AG04450 (cell line): ENCODE measurements at regions of chr1 and their contacts with region 1.

Region 1: GRCh38 chr1:11289064-11289463 is 16.1 kb downstream of the UBIAD1 start:
- DNase-seq: no peak
- H3K4me3 ChIP-seq: no peak overlapping the region
- H3K27ac ChIP-seq: no peak overlapping the region
- H3K27me3 ChIP-seq: no peaks in the 10 kb centered on the region
- CTCF ChIP-seq: no peak

Region 2: DNA sequence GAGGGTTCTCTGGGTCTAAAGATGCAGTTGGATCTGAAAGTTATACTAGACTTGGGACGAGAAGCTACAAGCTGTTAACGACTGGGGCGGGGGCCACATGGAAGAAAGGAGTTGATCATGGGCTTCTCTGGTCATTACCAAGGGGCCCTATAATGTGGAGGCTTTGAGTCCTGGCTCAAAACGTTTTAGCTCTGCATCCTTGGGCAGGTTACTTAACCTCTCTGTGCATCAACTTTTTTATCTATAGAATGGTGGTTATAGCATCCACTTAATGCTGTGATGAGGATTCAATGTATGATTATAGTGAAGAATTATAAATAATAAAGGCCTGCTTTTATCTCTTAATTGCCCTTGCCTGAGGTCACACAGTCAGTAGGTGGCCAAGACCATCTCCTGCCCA is 37.0 kb after region 1 on chr1:
- CTCF ChIA-PET with region 1: interaction called, 10 read pairs
- POLR2A ChIA-PET with region 1: no interaction called
- DNase-seq: no peak
- H3K4me3 ChIP-seq: no peak overlapping the region
- H3K27ac ChIP-seq: no peak overlapping the region
- H3K27me3 ChIP-seq: peaks cover 18% of the 10 kb centered on the region
- CTCF ChIP-seq: no peak

Region 3: DNA sequence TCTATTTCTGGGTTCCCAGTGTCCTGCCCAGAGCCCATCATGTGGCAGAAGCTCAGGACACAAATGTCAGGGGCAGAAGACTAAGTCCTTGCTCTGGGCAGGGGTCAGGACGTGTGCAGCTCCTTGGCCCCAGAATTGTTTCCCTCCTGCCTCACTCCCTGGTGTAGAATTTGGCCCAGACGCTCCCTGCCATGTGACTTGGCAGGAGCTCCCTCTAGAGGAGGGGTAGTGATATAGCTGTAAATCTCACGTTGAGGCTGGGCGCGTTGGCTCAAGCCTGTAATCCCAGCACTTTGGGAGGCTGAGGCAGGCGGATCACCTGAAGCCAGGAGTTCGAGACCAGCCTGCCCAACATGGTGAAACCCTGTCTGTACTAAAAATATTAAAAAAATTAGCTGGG is 75.1 kb after region 1 on chr1:
- CTCF ChIA-PET with region 1: no interaction called
- POLR2A ChIA-PET with region 1: no interaction called
- DNase-seq: no peak
- H3K4me3 ChIP-seq: no peak overlapping the region
- H3K27ac ChIP-seq: no peak overlapping the region
- H3K27me3 ChIP-seq: peaks cover under 1% of the 10 kb centered on the region
- CTCF ChIP-seq: no peak

Region 4: DNA sequence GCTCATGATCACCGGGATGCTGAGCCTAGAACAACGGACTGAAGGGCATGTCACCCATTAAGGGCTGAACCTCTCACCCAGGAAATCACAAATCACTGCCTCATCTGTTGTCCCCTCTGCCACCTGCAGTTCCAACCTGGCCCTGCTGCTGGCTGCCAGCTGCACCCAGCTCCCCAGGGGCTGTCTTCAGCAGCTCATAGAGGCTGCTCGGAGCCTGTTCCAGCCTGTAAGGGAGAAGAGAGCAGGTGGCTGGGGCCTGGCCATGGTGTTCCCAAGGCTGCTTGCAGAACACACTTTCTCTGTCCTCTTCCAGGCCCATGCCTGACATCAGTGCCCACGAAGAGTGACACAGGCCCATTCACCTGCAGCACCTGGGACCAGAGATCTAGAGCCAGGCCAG is 145.4 kb after region 1 on chr1:
- CTCF ChIA-PET with region 1: no interaction called
- POLR2A ChIA-PET with region 1: no interaction called
- DNase-seq: no peak
- H3K4me3 ChIP-seq: no peak overlapping the region
- H3K27ac ChIP-seq: no peak overlapping the region
- H3K27me3 ChIP-seq: peaks cover 9% of the 10 kb centered on the region
- CTCF ChIP-seq: no peak